A673 (cell line): ENCODE measurements at regions of chr3 and their contacts with region 1.

Region 1: DNA sequence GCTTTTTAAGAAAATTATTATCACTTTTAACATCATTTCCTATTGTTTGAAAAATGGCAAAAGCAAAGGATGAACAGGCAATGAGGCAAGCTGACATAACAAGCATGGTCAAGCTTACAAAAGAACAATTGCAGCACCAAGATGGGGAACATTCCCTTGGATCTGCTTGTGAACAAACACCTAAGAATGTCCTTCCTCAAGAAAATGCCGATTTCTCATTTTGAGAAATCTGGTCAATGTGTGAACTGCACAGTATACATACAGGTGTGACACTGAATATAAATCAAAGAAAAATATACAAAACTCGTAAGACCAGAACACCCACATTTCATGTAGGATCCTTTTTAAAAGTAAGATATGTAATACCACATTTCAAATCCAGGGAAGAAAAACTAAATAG is 58.9 kb downstream of the LRRFIP2 start:
- DNase-seq: no peak
- H3K4me3 ChIP-seq: no peak overlapping the region
- H3K27ac ChIP-seq: no peak overlapping the region
- H3K4me1 ChIP-seq: no peaks in the 10 kb centered on the region
- H3K27me3 ChIP-seq: no peaks in the 10 kb centered on the region
- CTCF ChIP-seq: no peak

Region 2: DNA sequence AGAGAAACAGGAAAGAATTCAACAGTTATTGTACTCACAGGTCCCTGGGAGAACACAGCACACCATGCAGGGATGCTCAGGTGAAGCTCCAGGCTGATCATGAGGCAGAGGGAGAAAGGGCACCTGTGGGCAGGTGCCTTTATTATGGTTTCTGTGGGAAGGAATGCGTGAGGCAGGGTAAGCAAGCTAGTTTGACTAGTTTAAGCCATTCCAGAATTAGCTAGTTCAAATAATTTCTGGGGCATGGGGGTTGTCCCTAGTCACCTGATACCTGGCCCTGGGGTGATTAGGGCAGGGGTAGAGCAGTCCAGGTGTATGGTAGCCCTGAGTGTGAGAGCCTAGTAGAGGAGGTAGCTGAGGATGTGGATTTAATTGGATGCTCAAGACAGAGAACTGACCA is 303.2 kb before region 1 on chr3:
- CTCF ChIA-PET with region 1: no interaction called
- POLR2A ChIA-PET with region 1: interaction called, 13 read pairs
- intact Hi-C with region 1: no loop called
- DNase-seq: no peak
- H3K4me3 ChIP-seq: no peak overlapping the region
- H3K27ac ChIP-seq: no peak overlapping the region
- H3K4me1 ChIP-seq: no peaks in the 10 kb centered on the region
- H3K27me3 ChIP-seq: no peaks in the 10 kb centered on the region
- CTCF ChIP-seq: no peak